ENCODE measurements at regions of chr7 and their contacts with region 1.

Region 1: GRCh38 chr7:151003572-151003971 is 12.8 kb downstream of the NOS3 start:
- H3K4me3 ChIP-seq: no peak overlapping the region
- H3K27ac ChIP-seq: no peak overlapping the region
- H3K4me1 ChIP-seq: no peaks in the 10 kb centered on the region
- CTCF ChIP-seq: no peak

Region 2: DNA sequence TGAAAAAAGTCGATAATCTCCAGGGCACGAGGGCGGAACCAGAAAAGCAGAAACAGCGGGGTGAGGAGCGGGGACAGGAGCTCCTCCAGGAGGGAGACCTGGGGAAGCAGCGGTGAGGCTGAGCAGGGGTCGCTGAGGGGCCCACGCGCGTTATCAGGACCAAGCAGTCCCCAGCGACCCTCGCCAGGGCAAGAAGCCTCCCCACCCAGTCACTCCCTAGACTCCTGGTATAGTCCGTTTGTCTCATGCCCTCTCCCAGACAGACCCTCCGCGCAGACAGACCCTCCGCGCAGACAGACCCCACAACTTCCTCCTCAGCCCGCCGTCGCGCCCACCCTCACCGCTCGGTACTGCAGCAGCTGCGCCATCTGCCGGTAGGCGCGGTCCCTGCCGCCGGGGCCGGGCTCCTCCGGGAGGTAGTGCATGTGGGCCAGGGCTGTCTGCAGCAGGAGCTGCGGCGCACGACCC is 14.4 kb after region 1 on chr7:
- CTCF ChIA-PET with region 1: interaction called, 29 read pairs
- POLR2A ChIA-PET with region 1: no interaction called
- H3K4me3 ChIP-seq: no peak overlapping the region
- H3K27ac ChIP-seq: no peak overlapping the region; the same call in 1 of the 2 replicates
- H3K4me1 ChIP-seq: no peaks in the 10 kb centered on the region
- CTCF ChIP-seq: peak; percentile 97